ENCODE measurements at regions of chr3 and their contacts with region 1.

Region 1: GRCh38 chr3:49171119-49171774 is at the start of gene KLHDC8B:
- DNase-seq: peak; percentile 63
- H3K4me3 ChIP-seq: peak within 1 kb of the TSS; percentile 66 to 78 (median 70)
- H3K27ac ChIP-seq: no peak within 1 kb of the TSS
- H3K4me1 ChIP-seq: peaks cover 9% of the 10 kb centered on the region
- H3K27me3 ChIP-seq: no peaks in the 10 kb centered on the region
- CTCF ChIP-seq: peak; percentile 83 to 97
- total RNA-seq, gene KLHDC8B: 10.9 to 25.7 TPM

Region 2: GRCh38 chr3:49032646-49033304 is 138.5 kb before region 1 on chr3:
- CTCF ChIA-PET with region 1: no interaction called
- dilution Hi-C with region 1: no loop called
- in situ Hi-C with region 1: no loop called
- intact Hi-C with region 1: no loop called
- DNase-seq: peak; percentile 29
- H3K4me3 ChIP-seq: no peak overlapping the region
- H3K27ac ChIP-seq: no peak overlapping the region
- H3K4me1 ChIP-seq: peaks cover 26% of the 10 kb centered on the region
- H3K27me3 ChIP-seq: no peaks in the 10 kb centered on the region
- CTCF ChIP-seq: no peak

Region 3: DNA sequence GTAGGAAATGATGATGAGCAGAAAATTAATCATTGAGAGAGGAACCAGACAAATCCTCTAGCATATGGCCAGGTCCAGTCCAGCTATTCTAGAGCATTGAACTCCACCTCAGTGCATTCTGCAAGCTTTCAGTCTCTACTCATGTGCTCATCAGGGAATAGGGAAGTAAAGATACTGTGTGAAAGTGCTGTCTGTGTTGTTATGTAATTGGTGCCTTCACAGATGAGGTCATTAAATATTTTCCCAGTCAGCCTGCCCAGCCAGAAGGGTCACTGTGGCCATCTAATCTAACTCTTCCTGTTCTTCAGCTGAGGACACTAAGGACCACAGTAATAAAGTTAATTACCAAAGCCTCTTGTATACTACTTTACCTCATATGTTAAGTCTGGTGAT is 77.6 kb after region 1 on chr3:
- CTCF ChIA-PET with region 1: no interaction called
- dilution Hi-C with region 1: loop called (anchors 5 kb)
- in situ Hi-C with region 1: no loop called
- intact Hi-C with region 1: loop called (anchors 2 kb)
- DNase-seq: peak; percentile 32
- H3K4me3 ChIP-seq: no peak overlapping the region
- H3K27ac ChIP-seq: no peak overlapping the region
- H3K4me1 ChIP-seq: peaks cover 6% of the 10 kb centered on the region
- H3K27me3 ChIP-seq: no peaks in the 10 kb centered on the region
- CTCF ChIP-seq: no peak

Region 4: DNA sequence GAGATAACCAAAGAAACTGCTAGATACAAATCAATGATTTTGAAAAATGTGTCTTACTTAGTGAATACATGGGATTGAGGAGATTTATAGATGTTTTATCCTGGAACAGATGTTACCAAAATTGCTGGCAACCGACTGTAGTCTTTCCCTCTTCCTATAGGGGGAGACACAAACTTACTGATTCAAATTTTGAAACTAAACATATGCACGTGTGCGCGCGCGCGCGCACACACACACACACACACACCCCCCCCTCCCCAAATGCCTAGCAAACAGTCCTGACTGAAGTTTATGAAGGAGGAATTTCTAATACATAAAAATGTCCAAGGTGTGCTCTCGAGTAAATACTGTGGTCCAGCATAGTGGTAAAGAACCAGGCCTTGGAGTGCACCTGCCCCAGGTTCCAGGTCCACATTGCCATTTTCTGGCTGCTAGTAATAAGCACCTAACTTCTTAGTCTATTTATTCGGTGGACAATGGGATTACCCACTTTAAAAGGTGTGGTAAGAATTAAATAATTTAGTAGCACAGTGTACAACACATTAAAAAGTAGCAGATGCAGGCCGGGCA is 124.3 kb after region 1 on chr3:
- CTCF ChIA-PET with region 1: no interaction called
- dilution Hi-C with region 1: no loop called
- in situ Hi-C with region 1: no loop called
- intact Hi-C with region 1: loop called (anchors 5 kb)
- DNase-seq: no peak
- H3K4me3 ChIP-seq: no peak overlapping the region
- H3K27ac ChIP-seq: no peak overlapping the region
- H3K4me1 ChIP-seq: peaks cover 14% of the 10 kb centered on the region
- H3K27me3 ChIP-seq: no peaks in the 10 kb centered on the region
- CTCF ChIP-seq: peak; percentile 52 to 57

Region 5: DNA sequence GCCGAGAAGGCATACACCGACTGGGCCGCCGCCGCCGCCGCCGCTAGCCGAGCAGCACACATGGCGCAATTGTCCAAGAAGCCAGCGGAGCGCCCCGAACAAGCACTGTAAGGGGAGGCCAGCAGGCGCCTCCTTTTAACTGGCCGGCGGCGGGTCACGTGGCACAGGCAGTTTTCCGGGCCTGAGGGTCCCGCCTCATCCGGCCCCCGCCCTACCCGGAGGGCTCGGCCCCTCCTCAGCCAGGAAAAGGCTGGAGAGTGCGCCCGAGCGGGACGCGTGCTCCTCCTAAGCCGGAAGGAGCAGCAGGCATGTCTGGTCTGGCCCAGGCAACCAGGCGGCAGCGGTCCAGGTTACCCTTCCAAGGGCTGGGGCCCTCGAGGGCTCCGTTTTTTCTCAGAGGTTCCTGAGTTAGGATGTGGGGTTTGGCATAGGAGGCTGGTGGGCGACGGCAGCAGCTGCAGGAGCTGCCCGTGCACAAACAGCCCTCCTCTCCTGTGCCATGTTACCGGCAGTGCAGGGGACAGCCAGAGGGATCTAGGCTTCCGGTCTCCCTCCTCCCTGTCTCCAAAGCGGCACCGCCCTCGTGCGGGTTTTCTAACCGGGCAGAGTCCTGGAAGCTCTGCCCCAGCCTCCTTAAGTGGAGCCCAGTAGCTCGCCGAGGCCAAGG is 187.1 kb after region 1 on chr3 and contains the start of gene GPX1:
- CTCF ChIA-PET with region 1: no interaction called
- dilution Hi-C with region 1: no loop called
- in situ Hi-C with region 1: no loop called
- intact Hi-C with region 1: loop called (anchors 2 kb)
- DNase-seq: peak; percentile 97
- H3K4me3 ChIP-seq: peak within 1 kb of the TSS; percentile 51 to 77 (median 66)
- H3K27ac ChIP-seq: peak within 1 kb of the TSS; percentile 85
- H3K4me1 ChIP-seq: peaks cover 33% of the 10 kb centered on the region
- H3K27me3 ChIP-seq: no peaks in the 10 kb centered on the region
- CTCF ChIP-seq: no peak
- total RNA-seq, gene GPX1: 275 to 607 TPM

Region 6: DNA sequence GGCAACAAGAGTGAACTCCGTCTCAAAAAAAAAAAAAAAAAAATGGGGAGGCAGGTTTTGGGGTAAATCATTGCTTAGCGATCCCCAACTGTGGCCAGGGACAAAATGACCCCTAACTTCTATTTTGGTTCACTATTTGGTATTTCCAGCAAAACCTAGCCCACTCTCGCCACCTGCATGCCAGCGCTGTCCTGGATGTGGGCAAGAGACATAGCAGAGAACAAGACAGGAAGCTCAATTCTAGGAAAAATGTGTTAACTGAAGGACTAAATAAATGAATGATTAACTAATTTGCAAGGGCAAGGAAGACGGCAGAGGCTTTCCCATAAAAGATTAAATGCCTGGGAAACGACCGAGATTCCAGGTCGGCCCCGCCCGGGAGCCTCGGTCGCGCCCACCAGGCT is 257.5 kb after region 1 on chr3:
- CTCF ChIA-PET with region 1: no interaction called
- dilution Hi-C with region 1: no loop called
- in situ Hi-C with region 1: loop called in 1 of 2 experiments (anchors 25 kb)
- intact Hi-C with region 1: no loop called
- DNase-seq: no peak
- H3K4me3 ChIP-seq: peak overlapping the region; percentile 74 to 79 (median 76)
- H3K27ac ChIP-seq: no peak overlapping the region
- H3K4me1 ChIP-seq: peaks cover 6% of the 10 kb centered on the region
- H3K27me3 ChIP-seq: no peaks in the 10 kb centered on the region
- CTCF ChIP-seq: no peak